Heart left ventricle (tissue), 16 donors: ENCODE measurements at regions of chr6 and their contacts with region 1.

Region 1: GRCh38 chr6:64325093-64325492 is 689.5 kb downstream of the PHF3 start:
- DNase-seq: no peak
- ATAC-seq: no peak
- H3K4me3 ChIP-seq: no peak overlapping the region
- H3K27ac ChIP-seq: no peak overlapping the region
- H3K4me1 ChIP-seq: no peaks in the 10 kb centered on the region
- H3K27me3 ChIP-seq: no peaks in the 10 kb centered on the region
- CTCF ChIP-seq: no peak
- POLR2A ChIP-seq: no peak

Region 2: DNA sequence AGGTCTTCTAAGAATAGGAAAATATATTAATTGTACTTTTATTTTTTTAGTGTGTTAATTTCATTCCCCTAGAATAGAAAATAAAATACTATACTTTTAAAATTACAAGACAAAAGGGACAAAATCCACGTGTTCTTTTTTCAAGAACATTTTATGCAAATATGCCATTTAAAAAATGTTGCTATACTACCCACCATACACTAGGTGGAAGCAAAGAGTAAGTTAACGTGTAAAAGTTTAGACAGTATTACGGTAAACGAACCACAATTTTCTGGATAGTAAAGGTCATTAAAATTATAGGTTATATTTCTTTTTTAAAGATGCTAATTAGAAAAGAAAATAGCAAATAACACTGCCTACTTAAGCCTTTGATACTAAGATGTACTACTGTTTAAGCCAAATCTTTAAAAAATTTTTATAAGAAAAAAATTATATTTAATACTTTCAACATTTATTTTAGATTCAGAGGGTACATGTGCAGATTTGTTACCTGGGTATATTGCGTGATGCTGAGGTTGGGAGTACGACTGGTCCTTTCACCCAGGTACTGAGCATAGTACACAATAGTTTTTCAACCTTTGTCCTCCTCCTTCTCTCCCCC is 401.9 kb before region 1 on chr6:
- intact Hi-C with region 1: loop called in 6 of 10 experiments (anchors 2 to 10 kb)
- DNase-seq: no peak
- ATAC-seq: peak in 2 of 4 donors; percentile 53 to 60
- H3K4me3 ChIP-seq: no peak overlapping the region
- H3K27ac ChIP-seq: no peak overlapping the region
- H3K4me1 ChIP-seq: no peaks in the 10 kb centered on the region
- H3K27me3 ChIP-seq: no peaks in the 10 kb centered on the region
- CTCF ChIP-seq: peak; percentile 50 to 75 (median 58)
- POLR2A ChIP-seq: no peak

Region 3: DNA sequence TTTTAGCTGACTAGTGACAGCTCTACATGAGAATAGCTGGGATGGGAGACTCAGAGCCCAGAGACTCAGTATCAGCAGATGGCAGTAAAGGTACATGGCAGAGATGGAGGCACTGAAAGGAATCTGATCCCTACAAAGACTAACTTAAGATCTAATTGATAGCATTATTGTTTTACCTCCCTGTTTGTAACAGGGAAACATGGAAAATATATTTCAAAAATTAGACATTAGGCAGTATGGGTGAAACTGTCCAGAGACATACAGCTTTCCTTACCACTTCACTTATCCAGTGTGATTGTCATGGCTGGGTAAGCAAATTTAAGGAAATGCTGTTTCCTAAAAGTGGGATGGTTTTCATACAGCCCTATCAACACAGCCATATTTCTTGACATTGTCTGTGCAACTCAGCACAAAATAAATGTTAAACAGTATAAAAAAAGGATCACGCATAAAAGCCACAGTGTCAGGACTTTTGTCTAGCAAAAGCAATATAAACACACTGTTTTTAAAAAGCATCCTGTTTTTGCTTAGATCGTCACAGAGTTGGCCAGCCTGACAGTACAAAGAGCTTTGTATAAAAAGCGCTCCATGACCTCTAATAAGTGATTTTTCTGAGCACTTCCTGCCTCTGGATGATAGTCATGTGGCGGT is 312.6 kb before region 1 on chr6:
- intact Hi-C with region 1: loop called in 6 of 10 experiments (anchors 2 to 10 kb)
- DNase-seq: no peak
- ATAC-seq: peak; percentile 37 to 73 (median 58)
- H3K4me3 ChIP-seq: peak overlapping the region in 7 of 12 donors; percentile 3 to 25 (median 10)
- H3K27ac ChIP-seq: no peak overlapping the region
- H3K4me1 ChIP-seq: peaks cover 0 to 8% (median 0%) of the 10 kb centered on the region in 12 donors
- H3K27me3 ChIP-seq: no peaks in the 10 kb centered on the region
- CTCF ChIP-seq: peak in 10 of 12 donors; percentile 13 to 70 (median 38)
- POLR2A ChIP-seq: no peak